Ovary (tissue), 10 donors: ENCODE measurements at regions of chr19 and their contacts with region 1.

Region 1: GRCh38 chr19:34041925-34042521 is 130.3 kb upstream of the LSM14A start:
- DNase-seq: peak; percentile 41 to 79 (median 71)
- H3K4me3 ChIP-seq: no peak overlapping the region
- H3K27ac ChIP-seq: no peak overlapping the region
- H3K4me1 ChIP-seq: no peaks in the 10 kb centered on the region
- H3K27me3 ChIP-seq: no peaks in the 10 kb centered on the region
- CTCF ChIP-seq: peak; percentile 54 to 60 (median 54)
- EP300 ChIP-seq: no peak
- POLR2A ChIP-seq: no peak

Region 2: DNA sequence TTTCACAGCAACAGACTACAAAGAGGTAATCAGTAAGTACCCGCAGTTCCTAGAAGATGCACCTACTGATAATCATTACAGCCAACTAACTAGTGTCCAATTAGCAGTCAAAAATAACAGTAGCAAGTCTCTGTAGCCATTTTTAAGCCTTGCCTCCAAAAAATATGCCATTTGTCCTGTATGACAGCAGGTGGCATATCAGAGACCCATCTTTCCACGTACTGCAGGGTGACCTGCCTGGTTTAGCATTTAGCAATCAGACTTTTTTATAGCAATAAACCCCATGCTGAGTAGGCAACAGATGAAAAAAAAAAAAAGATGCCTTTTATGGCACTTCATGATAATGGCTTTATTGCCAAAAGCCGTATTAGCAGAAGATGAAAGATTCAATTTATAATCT is 25.0 kb before region 1 on chr19:
- intact Hi-C with region 1: loop called in 1 of 4 experiments (anchors 1 kb)
- DNase-seq: no peak
- H3K4me3 ChIP-seq: no peak overlapping the region
- H3K27ac ChIP-seq: no peak overlapping the region
- H3K4me1 ChIP-seq: no peaks in the 10 kb centered on the region
- H3K27me3 ChIP-seq: no peaks in the 10 kb centered on the region
- CTCF ChIP-seq: no peak
- EP300 ChIP-seq: no peak
- POLR2A ChIP-seq: no peak

Region 3: DNA sequence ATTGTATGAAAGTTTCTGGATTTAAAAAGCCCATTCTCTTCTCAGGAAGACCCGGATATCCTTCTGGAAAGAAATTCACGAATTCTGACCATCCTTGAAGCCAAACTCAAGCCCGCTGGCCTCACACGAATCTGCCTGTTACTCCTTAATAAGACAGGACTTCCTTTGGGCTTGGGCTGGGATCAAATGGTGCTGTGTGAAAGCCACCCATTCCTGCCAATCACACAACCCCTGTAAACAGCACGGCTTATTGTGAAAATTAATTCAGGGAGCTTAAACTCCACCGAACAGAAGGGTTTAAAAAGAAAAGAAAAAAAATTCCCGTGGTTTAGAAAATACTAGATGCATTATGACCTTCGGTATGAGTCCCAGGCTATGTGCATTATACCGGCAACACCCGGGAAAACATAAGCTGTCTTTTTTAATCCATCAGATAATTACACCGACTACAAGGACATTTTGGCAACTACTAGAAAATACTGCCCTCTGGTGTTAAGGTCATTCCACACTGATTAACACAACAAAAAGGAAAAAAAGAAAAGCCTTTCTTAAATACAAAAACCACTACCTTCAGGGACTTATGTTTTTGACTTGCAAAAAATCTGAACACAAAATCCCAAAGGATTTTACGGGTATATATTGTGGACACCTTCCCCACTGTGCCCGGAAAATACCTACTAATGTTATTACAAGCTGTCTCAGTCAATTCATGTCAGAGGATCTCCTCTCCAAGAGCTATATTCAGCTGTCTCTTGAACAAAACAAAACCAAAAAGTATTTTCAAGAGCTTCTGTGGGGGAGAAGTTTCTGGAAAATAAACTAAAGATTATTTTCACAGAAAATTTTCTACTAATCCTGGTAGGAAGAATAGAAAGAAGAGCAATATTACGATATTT is 54.2 kb after region 1 on chr19:
- intact Hi-C with region 1: loop called in 1 of 4 experiments (anchors 5 kb)
- DNase-seq: no peak
- H3K4me3 ChIP-seq: no peak overlapping the region
- H3K27ac ChIP-seq: no peak overlapping the region
- H3K4me1 ChIP-seq: peaks cover 2% of the 10 kb centered on the region
- H3K27me3 ChIP-seq: no peaks in the 10 kb centered on the region
- CTCF ChIP-seq: peak in 2 of 3 donors; percentile 50
- EP300 ChIP-seq: no peak
- POLR2A ChIP-seq: no peak

Region 4: GRCh38 chr19:34145741-34146202 is 103.7 kb after region 1 on chr19:
- intact Hi-C with region 1: loop called in 2 of 4 experiments (anchors 5 to 10 kb)
- DNase-seq: peak; percentile 20 to 48 (median 42)
- H3K4me3 ChIP-seq: no peak overlapping the region
- H3K27ac ChIP-seq: no peak overlapping the region
- H3K4me1 ChIP-seq: no peaks in the 10 kb centered on the region
- H3K27me3 ChIP-seq: no peaks in the 10 kb centered on the region
- CTCF ChIP-seq: peak; percentile 70 to 72 (median 72)
- EP300 ChIP-seq: no peak
- POLR2A ChIP-seq: no peak